HEK293T (cell line): ENCODE measurements at regions of chr11 and their contacts with region 1.

Region 1: GRCh38 chr11:2151500-2152257 is 9.3 kb downstream of the INS start:
- DNase-seq: peak; percentile 79

Region 2: GRCh38 chr11:1694064-1694845 is 457.4 kb before region 1 on chr11:
- CTCF ChIA-PET with region 1: interaction called, 14 read pairs
- POLR2A ChIA-PET with region 1: no interaction called
- DNase-seq: peak; percentile 92

Region 3: DNA sequence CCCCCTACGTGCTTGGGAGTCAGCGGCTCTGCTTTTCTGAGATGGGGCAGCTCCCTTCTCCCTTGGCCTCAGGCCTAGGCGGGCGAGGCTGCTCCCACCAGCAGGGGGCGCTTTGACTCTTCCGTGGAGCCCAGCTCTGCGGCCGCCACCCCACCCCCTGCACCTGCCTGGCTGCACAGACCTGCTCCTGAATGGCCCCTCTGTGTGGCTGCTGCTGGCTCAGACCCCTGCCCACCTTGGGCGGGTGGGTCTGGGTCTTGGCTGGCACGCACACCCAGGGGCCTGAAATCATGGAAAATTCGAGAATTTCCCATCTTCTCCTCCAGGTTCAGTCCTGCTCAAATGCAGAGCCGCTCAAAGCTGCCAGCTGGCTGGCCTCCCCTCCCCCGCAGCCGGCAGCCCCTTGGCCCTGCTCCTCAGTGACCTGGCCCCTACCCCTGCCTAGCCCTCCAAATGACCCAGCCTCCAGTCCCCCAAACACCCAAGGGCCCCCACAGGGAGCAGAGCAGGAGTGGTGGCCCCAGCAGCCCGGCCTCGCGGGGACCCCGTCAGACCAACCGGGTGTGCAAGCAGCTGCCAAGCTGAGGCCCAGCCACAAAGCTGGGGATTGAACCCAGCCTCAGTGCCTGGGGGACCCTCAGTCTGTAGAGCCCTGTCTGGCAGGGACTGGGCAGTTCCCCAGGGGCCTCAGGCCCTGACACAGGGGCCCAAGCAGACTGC is 269.0 kb before region 1 on chr11:
- CTCF ChIA-PET with region 1: interaction called, 47 read pairs
- POLR2A ChIA-PET with region 1: no interaction called
- DNase-seq: peak; percentile 89

Region 4: GRCh38 chr11:2027708-2028107 is 124.0 kb before region 1 on chr11:
- CTCF ChIA-PET with region 1: interaction called, 120 read pairs
- POLR2A ChIA-PET with region 1: no interaction called
- DNase-seq: no peak

Region 5: DNA sequence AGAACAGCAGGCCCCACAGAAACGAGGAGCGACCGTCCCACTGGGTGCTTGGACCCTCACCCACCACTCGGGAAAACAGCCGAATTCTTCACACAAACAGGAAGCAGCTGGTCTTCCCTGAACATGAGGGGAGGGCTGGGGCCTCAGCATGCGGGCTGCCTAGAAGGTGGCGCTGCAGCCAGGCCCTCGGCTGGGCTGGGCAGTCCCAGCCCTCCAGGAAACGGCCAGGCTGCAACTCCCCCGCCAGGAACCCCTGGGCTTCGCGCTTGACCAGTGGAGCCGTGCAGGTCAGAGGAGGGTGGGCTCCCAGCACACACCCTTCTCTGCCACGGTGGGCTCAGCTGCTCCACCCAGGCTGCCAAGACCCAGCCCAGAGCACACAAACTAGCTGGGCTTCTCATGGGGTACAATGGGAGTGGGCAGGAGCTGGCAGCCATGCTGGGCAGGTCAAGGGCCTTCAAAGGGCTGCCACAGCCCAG is 42.1 kb before region 1 on chr11:
- CTCF ChIA-PET with region 1: no interaction called
- POLR2A ChIA-PET with region 1: no interaction called
- DNase-seq: no peak